ENCODE measurements at regions of chr18 and their contacts with region 1.

Region 1: DNA sequence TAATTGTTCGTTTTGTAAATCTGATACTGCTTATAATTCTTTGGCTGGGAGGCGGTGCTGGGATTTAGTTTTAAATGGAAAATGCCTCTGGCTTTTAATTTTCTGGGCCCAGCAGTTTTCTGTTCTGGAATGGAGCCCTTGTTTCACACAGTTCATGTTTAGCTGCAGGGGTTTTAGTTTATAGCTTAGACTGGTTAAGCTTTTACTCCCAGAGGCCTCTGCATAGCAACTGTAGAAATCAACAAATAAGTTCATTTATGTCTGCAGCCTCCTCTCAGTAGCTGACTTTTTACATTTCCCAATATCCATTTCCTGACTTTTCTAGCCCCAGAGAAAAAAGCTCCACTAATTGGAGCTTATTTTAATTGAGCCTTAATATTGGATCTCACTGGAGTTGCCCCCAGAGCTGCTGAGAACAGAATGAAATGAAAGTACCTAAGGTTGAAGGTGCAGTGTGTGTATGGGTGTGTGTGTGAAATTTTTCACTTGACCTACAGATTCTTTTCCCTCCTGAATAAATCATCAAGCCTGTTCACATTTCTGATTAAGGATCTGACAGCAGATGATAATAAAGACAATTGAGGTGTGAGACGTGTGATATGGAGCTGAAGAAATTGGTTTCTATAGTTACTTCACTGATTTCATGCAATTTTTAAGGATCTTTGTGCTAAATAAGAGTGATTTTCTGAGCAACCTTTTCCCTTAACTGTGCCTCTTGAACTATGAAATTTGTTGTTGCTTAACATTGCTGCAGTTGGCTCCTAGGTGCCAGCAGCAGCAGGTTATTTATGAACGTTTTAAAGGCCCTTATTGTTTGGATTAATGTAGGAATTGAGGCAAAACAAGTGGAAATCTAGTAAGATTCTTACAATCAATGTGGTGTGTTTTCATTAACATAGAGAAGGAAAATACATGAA is 109.6 kb downstream of the TAF4B start:
- DNase-seq: no peak
- ATAC-seq: no peak
- H3K4me3 ChIP-seq: no peak overlapping the region
- H3K4me3 Mint-ChIP-seq: no peak overlapping the region
- H3K27ac ChIP-seq: no peak overlapping the region
- H3K27ac Mint-ChIP-seq: peak overlapping the region in 4 of 9 donors; percentile 0 to 33 (median 14)
- H3K4me1 ChIP-seq: no peaks in the 10 kb centered on the region
- H3K4me1 Mint-ChIP-seq: peaks cover 0 to 16% (median 6%) of the 10 kb centered on the region in 7 donors
- H3K27me3 ChIP-seq: no peaks in the 10 kb centered on the region
- H3K27me3 Mint-ChIP-seq: no peaks in the 10 kb centered on the region

Region 2: GRCh38 chr18:24726727-24727492 is 1608.9 kb before region 1 on chr18:
- CTCF ChIA-PET with region 1: no interaction called
- POLR2A ChIA-PET with region 1: no interaction called
- intact Hi-C with region 1: loop called in 1 of 2 experiments (anchors 2 kb)
- DNase-seq: peak in 8 of 9 donors; percentile 8 to 53 (median 38)
- ATAC-seq: no peak
- H3K4me3 ChIP-seq: no peak overlapping the region
- H3K4me3 Mint-ChIP-seq: peak overlapping the region in 1 of 10 donors; percentile 6
- H3K27ac ChIP-seq: no peak overlapping the region
- H3K27ac Mint-ChIP-seq: no peak overlapping the region
- H3K4me1 ChIP-seq: peaks cover 0 to 5% of the 10 kb centered on the region in 2 donors
- H3K4me1 Mint-ChIP-seq: peaks cover 0 to 3% (median 0%) of the 10 kb centered on the region in 7 donors
- H3K27me3 ChIP-seq: peaks cover 0 to 2% of the 10 kb centered on the region in 2 donors
- H3K27me3 Mint-ChIP-seq: peaks cover 0 to 27% (median 15%) of the 10 kb centered on the region in 5 donors

Region 3: GRCh38 chr18:25921677-25922421 is 414.0 kb before region 1 on chr18:
- CTCF ChIA-PET with region 1: no interaction called
- POLR2A ChIA-PET with region 1: no interaction called
- intact Hi-C with region 1: loop called (anchors 1 to 2 kb)
- DNase-seq: peak in 6 of 9 donors; percentile 10 to 44 (median 28)
- ATAC-seq: peak; percentile 69
- H3K4me3 ChIP-seq: no peak overlapping the region
- H3K4me3 Mint-ChIP-seq: no peak overlapping the region
- H3K27ac ChIP-seq: no peak overlapping the region
- H3K27ac Mint-ChIP-seq: peak overlapping the region in 1 of 9 donors; percentile 28
- H3K4me1 ChIP-seq: no peaks in the 10 kb centered on the region
- H3K4me1 Mint-ChIP-seq: peaks cover 0 to 3% (median 0%) of the 10 kb centered on the region in 7 donors
- H3K27me3 ChIP-seq: no peaks in the 10 kb centered on the region
- H3K27me3 Mint-ChIP-seq: peaks cover 0 to 9% (median 1%) of the 10 kb centered on the region in 5 donors

Region 4: DNA sequence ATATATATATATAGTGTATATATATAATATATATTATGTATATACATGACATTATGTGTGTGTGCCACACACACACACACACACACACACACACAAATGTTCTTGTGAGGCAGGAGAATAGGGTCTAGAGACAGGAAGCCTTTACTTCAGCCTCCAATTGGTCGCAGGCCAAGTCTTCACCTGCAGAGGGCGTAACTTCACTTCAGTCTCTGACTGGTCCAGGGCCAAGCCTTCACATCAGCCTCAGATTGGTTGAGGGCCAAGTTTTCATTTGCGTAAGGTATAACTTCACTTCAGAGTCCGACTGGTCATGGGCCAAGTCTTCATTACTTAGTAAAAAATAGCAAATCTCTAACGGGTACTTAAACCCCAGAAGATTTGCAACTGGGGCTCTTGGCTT is 232.2 kb before region 1 on chr18:
- CTCF ChIA-PET with region 1: no interaction called
- POLR2A ChIA-PET with region 1: no interaction called
- intact Hi-C with region 1: loop called in 1 of 2 experiments (anchors 1 kb)
- DNase-seq: peak in 5 of 9 donors; percentile 12 to 41 (median 28)
- ATAC-seq: peak; percentile 60
- H3K4me3 ChIP-seq: no peak overlapping the region
- H3K4me3 Mint-ChIP-seq: no peak overlapping the region
- H3K27ac ChIP-seq: no peak overlapping the region
- H3K27ac Mint-ChIP-seq: no peak overlapping the region
- H3K4me1 ChIP-seq: no peaks in the 10 kb centered on the region
- H3K4me1 Mint-ChIP-seq: peaks cover 0 to 3% (median 0%) of the 10 kb centered on the region in 7 donors
- H3K27me3 ChIP-seq: no peaks in the 10 kb centered on the region
- H3K27me3 Mint-ChIP-seq: peaks cover 0 to 16% (median 0%) of the 10 kb centered on the region in 5 donors

Region 5: GRCh38 chr18:26121476-26121875 is 214.4 kb before region 1 on chr18:
- CTCF ChIA-PET with region 1: no interaction called
- POLR2A ChIA-PET with region 1: no interaction called
- intact Hi-C with region 1: no loop called
- DNase-seq: no peak
- ATAC-seq: no peak
- H3K4me3 ChIP-seq: no peak overlapping the region
- H3K4me3 Mint-ChIP-seq: no peak overlapping the region
- H3K27ac ChIP-seq: no peak overlapping the region
- H3K27ac Mint-ChIP-seq: peak overlapping the region in 1 of 9 donors; percentile 44
- H3K4me1 ChIP-seq: no peaks in the 10 kb centered on the region
- H3K4me1 Mint-ChIP-seq: peaks cover 0 to 9% (median 6%) of the 10 kb centered on the region in 7 donors
- H3K27me3 ChIP-seq: no peaks in the 10 kb centered on the region
- H3K27me3 Mint-ChIP-seq: peaks cover 3 to 11% (median 7%) of the 10 kb centered on the region in 5 donors

Region 6: GRCh38 chr18:26159353-26159752 is 176.5 kb before region 1 on chr18:
- CTCF ChIA-PET with region 1: no interaction called
- POLR2A ChIA-PET with region 1: interaction called, 5 read pairs
- intact Hi-C with region 1: loop called in 1 of 2 experiments (anchors 1 kb)
- DNase-seq: peak in 5 of 9 donors; percentile 7 to 37 (median 17)
- ATAC-seq: no peak
- H3K4me3 ChIP-seq: no peak overlapping the region
- H3K4me3 Mint-ChIP-seq: peak overlapping the region in 1 of 10 donors; percentile 2
- H3K27ac ChIP-seq: no peak overlapping the region
- H3K27ac Mint-ChIP-seq: no peak overlapping the region
- H3K4me1 ChIP-seq: no peaks in the 10 kb centered on the region
- H3K4me1 Mint-ChIP-seq: peaks cover 0 to 7% (median 2%) of the 10 kb centered on the region in 7 donors
- H3K27me3 ChIP-seq: no peaks in the 10 kb centered on the region
- H3K27me3 Mint-ChIP-seq: peaks cover 0 to 8% (median 0%) of the 10 kb centered on the region in 5 donors

Region 7: DNA sequence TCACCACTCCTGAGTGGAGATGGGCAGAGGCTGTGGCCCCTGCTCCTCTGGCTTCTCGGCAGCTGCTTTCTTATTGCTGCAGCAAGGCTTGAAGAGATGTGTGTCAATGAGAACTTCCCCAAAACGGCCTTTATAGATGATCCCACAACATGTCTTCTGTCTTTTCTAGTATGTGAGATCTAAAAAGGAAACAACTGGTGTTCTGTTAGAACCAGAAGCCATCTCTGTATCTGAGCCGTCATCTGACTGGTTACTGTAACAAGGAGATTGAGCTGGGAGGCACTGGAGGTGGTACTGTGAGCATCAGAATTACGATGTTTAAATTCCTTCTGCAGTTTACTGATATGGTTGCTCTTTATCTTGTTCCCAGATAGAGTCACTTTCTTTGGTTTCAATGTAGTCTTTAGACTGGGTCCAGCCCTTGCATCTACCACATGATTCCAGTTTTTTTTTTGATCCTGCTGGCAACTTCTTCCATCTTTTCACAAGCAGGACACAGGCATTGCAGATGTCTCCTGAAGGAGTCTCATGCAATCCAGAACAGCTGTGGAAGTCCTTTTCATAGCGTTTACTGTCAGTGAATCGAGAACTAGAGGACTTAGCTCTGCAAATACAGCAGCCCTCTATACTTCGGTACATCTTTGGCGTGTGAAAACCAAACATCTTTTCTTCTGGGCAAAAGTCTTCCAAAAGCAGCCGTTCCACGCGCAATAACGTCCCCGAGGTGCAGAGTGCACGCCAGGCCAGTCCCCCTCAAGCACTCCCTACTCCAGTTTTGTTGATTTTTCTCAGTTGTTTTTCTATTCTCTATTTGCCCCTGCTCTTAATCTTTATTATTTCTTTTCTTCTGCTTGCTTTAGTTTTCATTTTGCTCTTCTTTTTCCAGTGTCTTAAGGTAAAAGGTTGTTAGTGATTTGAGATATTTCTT is 79.9 kb before region 1 on chr18:
- CTCF ChIA-PET with region 1: no interaction called
- POLR2A ChIA-PET with region 1: no interaction called
- intact Hi-C with region 1: no loop called
- DNase-seq: no peak
- ATAC-seq: peak; percentile 68
- H3K4me3 ChIP-seq: no peak overlapping the region
- H3K4me3 Mint-ChIP-seq: peak overlapping the region in 8 of 10 donors; percentile 2 to 57 (median 27)
- H3K27ac ChIP-seq: no peak overlapping the region
- H3K27ac Mint-ChIP-seq: peak overlapping the region in 8 of 9 donors; percentile 15 to 82 (median 46)
- H3K4me1 ChIP-seq: no peaks in the 10 kb centered on the region
- H3K4me1 Mint-ChIP-seq: peaks cover 11 to 53% (median 41%) of the 10 kb centered on the region in 7 donors
- H3K27me3 ChIP-seq: no peaks in the 10 kb centered on the region
- H3K27me3 Mint-ChIP-seq: no peaks in the 10 kb centered on the region

Measured in naive thymus-derived CD4-positive, alpha-beta T cell (primary cell).